Activated CD4-positive, alpha-beta T cell treated with anti-CD3 and anti-CD28 coated beads for 36 hours (primary cell): ENCODE measurements at regions of chr19 and their contacts with region 1.

Region 1: GRCh38 chr19:48608798-48609263 is 2.3 kb downstream of the SPACA4 start:
- DNase-seq: peak; percentile 74
- ATAC-seq: peak; percentile 86
- H3K4me3 Mint-ChIP-seq: no peak overlapping the region
- H3K27ac Mint-ChIP-seq: no peak overlapping the region
- H3K4me1 Mint-ChIP-seq: peaks cover 3% of the 10 kb centered on the region
- H3K27me3 Mint-ChIP-seq: no peaks in the 10 kb centered on the region

Region 2: DNA sequence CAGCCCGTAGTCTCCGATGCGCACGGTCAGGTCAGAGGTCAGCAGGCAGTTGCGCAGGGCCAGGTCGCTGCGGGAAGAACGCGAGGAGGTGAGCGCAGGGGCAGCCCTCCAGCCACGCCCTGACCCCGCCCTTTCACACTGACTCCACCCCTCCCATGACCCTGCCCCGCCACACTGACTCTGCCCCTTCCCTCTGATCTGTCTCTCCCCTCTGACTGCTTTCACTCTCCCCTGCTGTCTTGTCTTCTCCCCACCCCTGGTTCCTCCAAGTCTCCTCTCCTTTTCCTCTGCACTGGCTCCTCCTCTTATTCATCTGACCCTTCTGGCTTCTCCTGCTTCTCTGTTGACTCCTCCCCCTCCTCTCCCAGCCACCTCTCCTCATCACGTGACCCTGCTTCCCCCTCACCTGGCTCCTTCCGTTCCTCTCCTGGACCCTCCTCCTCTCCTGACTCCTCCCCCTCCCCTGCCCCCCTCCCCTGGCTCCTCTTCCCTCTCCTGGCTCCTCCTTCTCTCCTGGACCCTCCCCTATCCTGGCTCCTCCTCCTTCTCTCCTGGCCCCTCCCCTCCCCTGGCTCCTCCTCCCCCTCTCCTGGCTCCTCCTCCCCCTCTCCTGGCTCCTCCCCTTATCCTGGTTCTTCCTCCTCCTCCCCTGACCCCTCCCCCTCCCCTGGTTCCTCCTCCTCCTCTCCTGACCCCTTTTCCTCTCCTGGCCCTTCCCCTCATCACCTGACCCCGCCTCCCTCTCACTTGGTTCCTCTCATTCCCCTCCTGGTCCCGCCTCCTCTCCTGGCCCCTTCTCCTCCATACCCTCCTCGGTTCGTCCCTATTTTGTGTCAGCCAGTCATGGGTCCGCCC is 107.1 kb before region 1 on chr19:
- CTCF ChIA-PET with region 1: interaction called, 35 read pairs
- POLR2A ChIA-PET with region 1: interaction called, 4 read pairs
- intact Hi-C with region 1: loop called (anchors 1 kb)
- DNase-seq: peak; percentile 86
- ATAC-seq: peak; percentile 76
- H3K4me3 Mint-ChIP-seq: peak overlapping the region; percentile 45
- H3K27ac Mint-ChIP-seq: peak overlapping the region; percentile 44
- H3K4me1 Mint-ChIP-seq: peaks cover 18% of the 10 kb centered on the region
- H3K27me3 Mint-ChIP-seq: peaks cover 16% of the 10 kb centered on the region